HEK293T (cell line): ENCODE measurements at regions of chr14 and their contacts with region 1.

Region 1: DNA sequence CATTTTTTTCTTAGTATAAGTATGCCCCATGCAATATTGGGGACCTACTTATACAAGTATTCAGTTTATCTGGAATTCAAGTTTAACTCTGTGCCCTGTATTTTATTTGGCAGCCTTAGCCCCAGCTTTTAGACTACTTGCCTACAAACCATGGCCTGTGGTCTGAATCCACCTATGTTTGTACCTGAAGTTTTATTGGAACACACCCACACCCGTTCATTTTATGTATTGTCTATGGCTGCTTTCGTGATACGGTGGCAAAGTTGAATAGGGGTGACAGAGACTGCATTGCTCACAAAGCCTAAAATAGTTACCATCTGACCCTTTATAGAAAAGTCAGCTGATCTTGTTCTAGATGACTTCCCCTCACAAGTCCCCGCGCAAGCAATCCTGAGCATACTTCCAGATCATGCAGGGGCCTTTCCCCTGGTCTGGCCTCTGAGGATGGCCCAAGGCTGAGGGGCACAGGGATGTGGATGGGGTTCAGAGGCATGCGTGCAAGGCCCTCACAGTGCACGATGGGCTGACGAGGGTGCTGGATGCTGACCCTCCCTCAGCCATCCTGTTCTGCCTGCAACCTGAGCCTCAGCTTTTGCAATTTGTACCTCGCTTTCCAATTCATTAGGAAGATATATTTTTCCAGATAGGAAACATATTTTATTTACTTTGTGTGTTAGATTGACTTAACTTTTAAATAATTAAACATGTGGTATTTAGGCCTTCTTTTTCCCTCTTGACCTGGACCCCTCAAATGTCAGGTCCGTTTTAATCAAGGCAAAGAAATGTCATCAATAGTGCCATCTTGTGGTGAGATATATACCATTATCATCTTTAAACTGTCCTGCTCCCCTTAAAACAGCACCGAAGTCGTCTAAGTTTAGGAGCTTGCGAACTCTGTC is 527.3 kb upstream of the CCDC196 start:
- DNase-seq: peak; percentile 39

Region 2: DNA sequence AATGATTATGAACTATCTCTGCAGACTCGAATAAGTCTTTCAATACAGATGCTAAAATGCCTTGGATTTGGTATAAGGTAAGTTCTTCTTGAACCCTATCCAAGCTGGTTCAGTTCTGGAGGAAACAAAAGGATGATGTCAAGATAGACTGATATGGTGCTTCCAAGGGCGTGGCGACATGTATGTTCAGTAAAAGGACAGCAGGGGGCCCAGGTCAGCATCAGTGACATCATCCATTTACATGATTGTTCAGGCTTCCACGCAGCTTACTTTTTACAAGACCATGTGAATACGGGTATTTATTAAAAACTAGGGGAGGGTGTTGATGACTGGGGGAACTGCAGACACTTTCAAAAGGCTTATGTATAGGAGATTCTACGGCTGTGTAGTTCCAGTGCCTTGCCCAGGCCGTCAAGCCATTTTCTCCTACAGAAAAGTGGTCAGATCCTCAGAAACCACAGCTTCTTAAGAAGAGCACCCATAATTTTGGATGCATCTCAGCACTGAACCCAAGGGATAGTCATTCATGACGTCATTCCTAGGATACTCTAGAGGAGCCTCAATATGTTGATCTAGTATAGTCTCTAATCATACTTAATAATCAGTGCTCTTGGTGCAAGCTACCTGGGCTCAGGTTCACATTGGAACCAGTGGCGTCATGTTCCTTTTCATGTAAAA is 18.7 kb before region 1 on chr14:
- CTCF ChIA-PET with region 1: interaction called, 12 read pairs
- POLR2A ChIA-PET with region 1: interaction called, 3 read pairs
- DNase-seq: peak; percentile 32

Region 3: DNA sequence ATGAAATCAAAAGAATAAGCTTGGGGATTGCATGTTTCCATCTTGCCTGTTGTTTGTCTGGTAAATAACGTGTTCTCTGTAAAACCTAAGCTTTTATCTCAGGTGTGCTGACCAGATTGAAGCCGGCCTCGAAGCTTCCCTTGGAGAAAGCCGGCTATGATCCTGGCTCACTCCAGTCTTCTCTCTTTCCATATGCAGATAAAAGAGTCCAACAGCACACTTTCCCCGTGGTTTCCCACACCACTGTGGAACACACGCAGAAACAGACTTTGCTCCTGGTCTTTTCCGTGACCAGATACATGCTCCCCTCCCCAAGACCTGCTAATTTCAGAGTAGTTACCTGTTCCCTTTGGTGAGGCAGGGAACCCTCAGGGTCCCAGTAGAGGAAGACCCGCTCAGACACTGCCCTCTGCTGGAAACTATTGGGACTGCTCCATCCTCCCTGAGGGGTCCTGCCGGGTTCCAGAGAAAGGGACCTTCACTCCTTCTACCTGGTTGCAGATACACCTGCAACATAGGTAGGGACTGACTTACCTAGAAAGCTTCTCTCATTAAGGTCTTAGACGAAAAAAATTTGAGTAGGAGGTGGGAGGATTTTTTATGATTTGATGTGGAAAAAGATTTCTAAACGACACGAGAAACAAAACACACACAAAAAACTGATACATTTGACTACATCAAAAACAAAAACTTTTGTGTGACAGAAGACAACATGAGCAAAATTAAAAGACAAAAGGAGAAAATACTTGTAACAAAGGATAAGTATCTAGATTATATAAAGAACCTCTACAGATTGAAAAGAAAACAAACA is 111.8 kb after region 1 on chr14:
- CTCF ChIA-PET with region 1: interaction called, 15 read pairs
- POLR2A ChIA-PET with region 1: no interaction called
- DNase-seq: peak; percentile 76

Region 4: GRCh38 chr14:66568220-66568619 is 609.3 kb after region 1 on chr14:
- CTCF ChIA-PET with region 1: no interaction called
- POLR2A ChIA-PET with region 1: no interaction called
- DNase-seq: no peak